ENCODE measurements at regions of chr3 and their contacts with region 1.

Region 1: DNA sequence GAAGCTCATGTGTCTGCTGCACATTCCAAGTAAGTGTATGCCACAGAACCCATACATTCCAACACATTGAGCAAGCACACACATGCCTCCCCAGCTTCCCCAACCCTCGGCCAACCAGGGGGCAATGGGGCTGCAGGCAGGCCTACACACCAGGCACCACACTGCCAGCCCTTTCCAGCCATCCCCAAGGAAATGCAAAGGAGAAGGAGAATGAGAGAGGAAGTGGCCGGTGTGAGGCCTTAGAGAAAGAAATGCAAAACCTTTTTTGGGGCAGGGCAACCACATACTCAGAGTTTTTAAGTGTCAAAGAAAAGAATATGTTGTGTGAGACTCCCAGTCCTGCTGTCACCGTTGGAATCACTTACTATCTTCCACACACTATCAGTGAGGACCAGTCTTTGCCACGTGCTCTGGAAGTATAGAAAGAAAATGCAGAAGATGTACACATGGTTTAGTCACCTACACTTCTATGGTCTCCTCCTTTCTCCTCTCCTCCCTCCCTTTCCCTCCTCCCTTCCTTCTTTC is 11.1 kb downstream of the IGF2BP2 start:
- DNase-seq: no peak
- H3K4me3 ChIP-seq: no peak overlapping the region
- H3K27ac ChIP-seq: no peak overlapping the region
- H3K4me1 ChIP-seq: peaks cover 30% of the 10 kb centered on the region
- H3K27me3 ChIP-seq: no peaks in the 10 kb centered on the region
- CTCF ChIP-seq: no peak
- POLR2A ChIP-seq: no peak

Region 2: GRCh38 chr3:185561374-185561943 is 252.3 kb before region 1 on chr3:
- CTCF ChIA-PET with region 1: no interaction called
- POLR2A ChIA-PET with region 1: no interaction called
- dilution Hi-C with region 1: no loop called
- intact Hi-C with region 1: no loop called
- DNase-seq: no peak
- H3K4me3 ChIP-seq: no peak overlapping the region
- H3K27ac ChIP-seq: no peak overlapping the region
- H3K4me1 ChIP-seq: no peaks in the 10 kb centered on the region
- H3K27me3 ChIP-seq: peaks cover 9 to 10% of the 10 kb centered on the region in 2 experiments
- CTCF ChIP-seq: no peak
- POLR2A ChIP-seq: no peak

Region 3: DNA sequence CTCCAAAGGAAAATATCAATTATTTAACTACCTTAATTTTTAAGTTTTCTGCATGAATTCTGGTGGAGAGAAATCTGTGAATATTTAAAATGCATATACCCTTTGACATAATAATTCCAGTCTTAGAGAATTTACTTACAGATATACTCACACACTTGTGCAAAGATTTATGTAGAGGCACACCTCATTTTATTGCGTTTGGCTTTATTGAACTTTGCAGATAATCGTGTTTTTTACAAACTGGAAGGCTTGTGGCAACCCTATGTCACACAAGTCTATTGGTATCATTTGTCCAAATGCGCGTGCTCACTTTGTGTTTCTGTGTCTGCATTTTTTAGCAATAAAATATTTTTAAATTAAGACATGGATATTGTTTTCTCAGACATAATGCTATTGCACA is 146.2 kb before region 1 on chr3:
- CTCF ChIA-PET with region 1: no interaction called
- POLR2A ChIA-PET with region 1: interaction called, 11 read pairs
- dilution Hi-C with region 1: no loop called
- intact Hi-C with region 1: no loop called
- DNase-seq: no peak
- H3K4me3 ChIP-seq: no peak overlapping the region
- H3K27ac ChIP-seq: no peak overlapping the region
- H3K4me1 ChIP-seq: no peaks in the 10 kb centered on the region
- H3K27me3 ChIP-seq: no peaks in the 10 kb centered on the region
- CTCF ChIP-seq: no peak
- POLR2A ChIP-seq: no peak

Region 4: GRCh38 chr3:185754920-185755319 is 58.8 kb before region 1 on chr3:
- CTCF ChIA-PET with region 1: no interaction called
- POLR2A ChIA-PET with region 1: no interaction called
- dilution Hi-C with region 1: no loop called
- intact Hi-C with region 1: no loop called
- DNase-seq: no peak
- H3K4me3 ChIP-seq: no peak overlapping the region
- H3K27ac ChIP-seq: no peak overlapping the region
- H3K4me1 ChIP-seq: peaks cover 23% of the 10 kb centered on the region
- H3K27me3 ChIP-seq: no peaks in the 10 kb centered on the region
- CTCF ChIP-seq: no peak
- POLR2A ChIP-seq: no peak